HCT116 (cell line): ENCODE measurements at regions of chr3 and their contacts with region 1.

Region 1: DNA sequence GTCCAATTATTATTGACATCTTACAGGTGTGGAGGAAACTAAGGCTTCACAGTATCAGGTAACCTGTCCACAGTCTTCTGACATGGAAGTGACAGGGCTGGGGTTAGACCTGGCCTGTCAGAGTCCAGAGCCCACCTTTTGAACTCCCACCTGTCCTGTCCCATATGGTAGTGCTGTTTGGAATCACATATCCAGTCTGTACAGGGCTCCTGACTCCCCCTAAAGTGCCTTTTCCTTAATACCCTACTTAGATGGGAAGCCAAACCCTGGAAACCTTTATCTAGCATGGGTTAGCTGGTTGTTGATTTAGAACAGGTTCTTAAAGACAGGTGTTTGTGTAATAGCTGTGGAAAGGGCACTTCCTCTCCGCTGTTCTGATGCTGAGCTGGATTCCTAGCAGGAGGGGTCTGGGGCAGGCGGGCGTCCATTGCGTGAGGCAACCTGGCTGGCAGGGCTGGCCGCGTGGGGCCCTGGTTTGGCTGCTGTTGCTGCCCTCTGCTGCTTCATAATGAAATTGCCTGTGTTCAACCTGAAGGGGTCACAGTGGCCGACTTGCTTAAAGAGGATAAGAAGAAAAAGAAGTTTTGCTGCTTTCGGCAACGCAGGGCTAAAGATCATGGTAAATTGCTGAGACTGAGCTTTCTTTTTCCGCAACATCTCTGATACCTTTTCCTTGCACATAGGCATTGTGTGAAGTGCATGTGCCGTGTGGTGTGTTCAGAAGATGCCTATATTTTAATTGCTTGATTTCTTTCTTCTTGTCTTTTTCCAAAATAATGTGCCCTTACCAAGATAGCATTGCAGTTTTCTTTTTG is 136.2 kb downstream of the CHDH start:
- DNase-seq: peak; percentile 65
- ATAC-seq: peak; percentile 98
- H3K4me3 ChIP-seq: no peak overlapping the region
- H3K27ac ChIP-seq: no peak overlapping the region
- H3K4me1 ChIP-seq: peaks cover 0 to 4% of the 10 kb centered on the region in 2 experiments; a peak in 1 of 4 replicates
- H3K27me3 ChIP-seq: no peaks in the 10 kb centered on the region; the same call in 1 of the 2 replicates
- CTCF ChIP-seq: peak; percentile 78 to 88 (median 83)
- POLR2A ChIP-seq: no peak
- RAD21 ChIP-seq: peak; percentile 91

Region 2: DNA sequence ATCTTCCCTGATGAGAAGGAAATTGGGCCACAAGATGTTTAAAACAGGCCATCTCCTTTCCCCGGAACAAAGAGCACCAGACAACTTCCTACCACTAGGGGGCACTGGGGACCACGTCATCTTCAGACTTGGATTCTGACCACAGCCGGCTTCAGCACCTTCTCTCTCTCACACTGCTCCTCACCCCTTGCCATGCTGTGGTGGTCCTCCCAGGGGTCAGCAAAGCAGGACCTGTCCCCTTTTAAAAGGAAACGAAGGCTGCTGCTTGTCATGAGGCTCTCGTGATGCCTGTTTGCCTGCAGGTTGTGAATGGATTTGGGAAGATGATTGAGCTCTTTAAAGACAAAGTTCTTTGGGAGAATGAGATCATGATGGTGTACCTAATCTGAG is 596.1 kb before region 1 on chr3:
- CTCF ChIA-PET with region 1: no interaction called
- POLR2A ChIA-PET with region 1: no interaction called
- RAD21 ChIA-PET with region 1: no interaction called
- intact Hi-C with region 1: loop called (anchors 10 kb)
- DNase-seq: peak; percentile 54
- ATAC-seq: peak; percentile 86
- H3K4me3 ChIP-seq: no peak overlapping the region
- H3K27ac ChIP-seq: no peak overlapping the region
- H3K4me1 ChIP-seq: no peaks in the 10 kb centered on the region; a peak in 1 of 4 replicates
- H3K27me3 ChIP-seq: no peaks in the 10 kb centered on the region
- CTCF ChIP-seq: peak; percentile 81 to 97 (median 94)
- POLR2A ChIP-seq: no peak
- RAD21 ChIP-seq: peak; percentile 92

Region 3: GRCh38 chr3:53219895-53220483 is 490.1 kb before region 1 on chr3:
- CTCF ChIA-PET with region 1: no interaction called
- POLR2A ChIA-PET with region 1: no interaction called
- RAD21 ChIA-PET with region 1: no interaction called
- intact Hi-C with region 1: loop called (anchors 5 kb)
- DNase-seq: peak; percentile 57
- ATAC-seq: peak; percentile 89
- H3K4me3 ChIP-seq: no peak overlapping the region
- H3K27ac ChIP-seq: no peak overlapping the region
- H3K4me1 ChIP-seq: peaks cover 0 to 4% of the 10 kb centered on the region in 2 experiments; a peak in 1 of 4 replicates
- H3K27me3 ChIP-seq: no peaks in the 10 kb centered on the region
- CTCF ChIP-seq: peak; percentile 93 to 97 (median 94)
- POLR2A ChIP-seq: no peak
- RAD21 ChIP-seq: peak; percentile 90

Region 4: GRCh38 chr3:53303957-53304356 is 406.1 kb before region 1 on chr3:
- CTCF ChIA-PET with region 1: no interaction called
- POLR2A ChIA-PET with region 1: no interaction called
- RAD21 ChIA-PET with region 1: no interaction called
- intact Hi-C with region 1: loop called (anchors 1 kb)
- DNase-seq: no peak
- ATAC-seq: no peak
- H3K4me3 ChIP-seq: no peak overlapping the region
- H3K27ac ChIP-seq: no peak overlapping the region
- H3K4me1 ChIP-seq: no peaks in the 10 kb centered on the region
- H3K27me3 ChIP-seq: no peaks in the 10 kb centered on the region
- CTCF ChIP-seq: no peak
- POLR2A ChIP-seq: no peak
- RAD21 ChIP-seq: no peak

Region 5: DNA sequence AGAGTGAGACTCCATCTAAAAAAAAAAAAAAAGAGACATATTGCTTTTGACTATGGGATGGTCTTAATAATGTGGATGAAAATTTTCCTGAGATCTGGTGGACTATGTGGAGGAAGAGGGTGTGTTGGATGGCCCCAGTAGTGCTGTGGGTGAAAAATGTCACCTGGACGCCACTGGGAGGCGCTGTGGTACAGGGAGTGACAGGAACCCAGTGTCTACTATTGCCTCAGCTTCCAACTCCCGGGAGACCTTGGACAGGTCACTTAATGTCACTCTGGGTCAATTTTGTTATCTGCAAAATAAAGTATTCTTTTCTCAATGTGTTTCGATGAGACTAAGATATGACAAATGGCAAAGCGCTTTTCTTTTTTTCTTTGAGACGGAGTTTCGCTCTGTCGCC is 335.0 kb before region 1 on chr3:
- CTCF ChIA-PET with region 1: interaction called, 16 read pairs
- POLR2A ChIA-PET with region 1: no interaction called
- RAD21 ChIA-PET with region 1: interaction called in 1 of 2 experiments, 4 read pairs
- intact Hi-C with region 1: loop called (anchors 2 kb)
- DNase-seq: peak; percentile 65
- ATAC-seq: peak; percentile 100
- H3K4me3 ChIP-seq: no peak overlapping the region
- H3K27ac ChIP-seq: no peak overlapping the region
- H3K4me1 ChIP-seq: no peaks in the 10 kb centered on the region
- H3K27me3 ChIP-seq: peaks cover 9% of the 10 kb centered on the region
- CTCF ChIP-seq: peak; percentile 75 to 91 (median 83)
- POLR2A ChIP-seq: no peak
- RAD21 ChIP-seq: peak; percentile 93

Region 6: GRCh38 chr3:53996141-53996861 is 286.2 kb after region 1 on chr3:
- CTCF ChIA-PET with region 1: no interaction called
- POLR2A ChIA-PET with region 1: no interaction called
- RAD21 ChIA-PET with region 1: no interaction called
- intact Hi-C with region 1: no loop called
- DNase-seq: no peak
- ATAC-seq: peak; percentile 69
- H3K4me3 ChIP-seq: no peak overlapping the region
- H3K27ac ChIP-seq: no peak overlapping the region
- H3K4me1 ChIP-seq: peaks cover 0 to 11% of the 10 kb centered on the region in 2 experiments; a peak in 2 of 4 replicates
- H3K27me3 ChIP-seq: 0 out of 2 replicates have a peak, but pooled peaks cover 4% of the 10 kb centered on the region
- CTCF ChIP-seq: no peak
- POLR2A ChIP-seq: no peak
- RAD21 ChIP-seq: no peak